ENCODE measurements at regions of chr10 and their contacts with region 1.

Region 1: GRCh38 chr10:112949875-112950507 is at the start of gene TCF7L2:
- DNase-seq: peak; percentile 97
- H3K4me3 ChIP-seq: peak within 1 kb of the TSS; percentile 68 to 78
- H3K27ac ChIP-seq: peak within 1 kb of the TSS; percentile 91 to 98
- H3K4me1 ChIP-seq: peaks cover 17% of the 10 kb centered on the region
- H3K27me3 ChIP-seq: no peaks in the 10 kb centered on the region
- CTCF ChIP-seq: no peak
- POLR2A ChIP-seq: peak; percentile 77
- total RNA-seq, gene TCF7L2: 9.8 to 29.8 TPM

Region 2: GRCh38 chr10:112728118-112728883 is 221.7 kb before region 1 on chr10:
- intact Hi-C with region 1: loop called (anchors 5 kb)
- DNase-seq: no peak
- H3K4me3 ChIP-seq: no peak overlapping the region
- H3K27ac ChIP-seq: no peak overlapping the region
- H3K4me1 ChIP-seq: no peaks in the 10 kb centered on the region
- H3K27me3 ChIP-seq: no peaks in the 10 kb centered on the region
- CTCF ChIP-seq: no peak
- POLR2A ChIP-seq: no peak